ENCODE measurements at regions of chr19 and their contacts with region 1.

Region 1: GRCh38 chr19:19132912-19133311 is 5.4 kb downstream of the TMEM161A start:
- DNase-seq: no peak
- ATAC-seq: no peak
- H3K4me3 Mint-ChIP-seq: no peak overlapping the region
- H3K27ac Mint-ChIP-seq: no peak overlapping the region
- H3K4me1 Mint-ChIP-seq: peaks cover 19% of the 10 kb centered on the region
- H3K27me3 Mint-ChIP-seq: no peaks in the 10 kb centered on the region
- CTCF ChIP-seq: no peak

Region 2: GRCh38 chr19:19937403-19937802 is 804.5 kb after region 1 on chr19:
- CTCF ChIA-PET with region 1: no interaction called
- POLR2A ChIA-PET with region 1: interaction called, 11 read pairs
- intact Hi-C with region 1: no loop called
- DNase-seq: no peak
- ATAC-seq: no peak
- H3K4me3 Mint-ChIP-seq: peak overlapping the region; percentile 11
- H3K27ac Mint-ChIP-seq: peak overlapping the region; percentile 46
- H3K4me1 Mint-ChIP-seq: peaks cover 18% of the 10 kb centered on the region
- H3K27me3 Mint-ChIP-seq: no peaks in the 10 kb centered on the region
- CTCF ChIP-seq: no peak

Measured in activated B cell treated with CpG ODN at 0.5 μM for 24 hours (primary cell).